ENCODE measurements at regions of chr16 and their contacts with region 1.

Region 1: DNA sequence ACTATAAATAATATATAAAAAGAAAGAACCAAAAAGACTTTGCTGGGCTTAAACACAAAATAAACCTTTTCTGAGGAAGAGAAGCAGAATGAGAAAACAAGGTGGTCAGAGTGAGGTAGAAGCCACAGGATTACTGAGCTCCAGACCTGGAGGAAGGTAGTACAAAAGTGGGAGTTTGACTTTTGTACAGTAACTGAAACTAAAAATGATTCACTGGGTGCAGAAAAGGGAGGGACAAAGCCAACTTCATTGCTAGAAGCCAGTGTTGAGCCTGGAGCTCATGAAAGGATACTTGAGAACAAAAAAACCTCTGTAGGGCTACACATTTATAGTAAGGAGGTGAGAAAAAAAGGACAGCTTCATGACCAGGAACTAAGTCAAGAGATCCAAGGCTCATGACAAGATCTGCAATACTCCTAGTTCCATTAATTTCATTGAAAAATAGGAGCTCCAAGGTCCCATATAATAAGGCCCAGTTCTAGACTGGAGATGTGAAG is 45.5 kb downstream of the PKD1L3 start:
- DNase-seq: peak; percentile 8
- H3K4me3 ChIP-seq: no peak overlapping the region
- H3K27ac ChIP-seq: no peak overlapping the region
- H3K4me1 ChIP-seq: no peaks in the 10 kb centered on the region
- H3K27me3 ChIP-seq: no peaks in the 10 kb centered on the region
- CTCF ChIP-seq: no peak

Region 2: GRCh38 chr16:71830359-71830758 is 124.4 kb before region 1 on chr16:
- CTCF ChIA-PET with region 1: no interaction called
- dilution Hi-C with region 1: no loop called
- in situ Hi-C with region 1: no loop called
- intact Hi-C with region 1: no loop called
- DNase-seq: no peak
- H3K4me3 ChIP-seq: no peak overlapping the region
- H3K27ac ChIP-seq: no peak overlapping the region
- H3K4me1 ChIP-seq: no peaks in the 10 kb centered on the region
- H3K27me3 ChIP-seq: no peaks in the 10 kb centered on the region
- CTCF ChIP-seq: no peak

Region 3: GRCh38 chr16:71903608-71904007 is 51.1 kb before region 1 on chr16:
- CTCF ChIA-PET with region 1: no interaction called
- dilution Hi-C with region 1: loop called (anchors 5 kb)
- in situ Hi-C with region 1: no loop called
- intact Hi-C with region 1: no loop called
- DNase-seq: no peak
- H3K4me3 ChIP-seq: no peak overlapping the region
- H3K27ac ChIP-seq: no peak overlapping the region
- H3K4me1 ChIP-seq: no peaks in the 10 kb centered on the region
- H3K27me3 ChIP-seq: no peaks in the 10 kb centered on the region
- CTCF ChIP-seq: no peak

Region 4: GRCh38 chr16:71933913-71934695 is 20.6 kb before region 1 on chr16:
- CTCF ChIA-PET with region 1: no interaction called
- dilution Hi-C with region 1: no loop called
- in situ Hi-C with region 1: no loop called
- intact Hi-C with region 1: no loop called
- DNase-seq: peak; percentile 25
- H3K4me3 ChIP-seq: no peak overlapping the region
- H3K27ac ChIP-seq: no peak overlapping the region
- H3K4me1 ChIP-seq: peaks cover 1% of the 10 kb centered on the region
- H3K27me3 ChIP-seq: no peaks in the 10 kb centered on the region
- CTCF ChIP-seq: no peak

Region 5: DNA sequence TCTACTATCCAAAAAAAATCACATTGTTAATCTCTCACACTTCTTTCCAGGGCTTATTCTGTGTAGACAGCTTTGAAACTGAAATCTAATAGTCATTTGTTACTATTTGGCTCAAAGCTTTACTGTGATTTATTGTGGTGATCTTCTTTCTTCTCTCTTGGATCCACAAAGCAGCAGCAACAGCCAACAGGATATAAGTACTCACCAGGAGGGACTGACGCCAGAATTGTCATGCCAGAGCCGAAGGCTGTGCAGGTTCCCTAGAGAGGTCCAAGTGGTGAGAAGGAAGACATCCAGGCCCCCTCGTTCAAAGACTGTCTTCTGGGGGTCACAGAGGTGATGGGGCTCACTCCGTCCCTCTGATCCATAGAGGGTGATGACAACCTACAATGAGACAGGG is 12.2 kb after region 1 on chr16:
- CTCF ChIA-PET with region 1: no interaction called
- dilution Hi-C with region 1: no loop called
- in situ Hi-C with region 1: no loop called
- intact Hi-C with region 1: no loop called
- DNase-seq: no peak
- H3K4me3 ChIP-seq: no peak overlapping the region
- H3K27ac ChIP-seq: no peak overlapping the region
- H3K4me1 ChIP-seq: no peaks in the 10 kb centered on the region
- H3K27me3 ChIP-seq: no peaks in the 10 kb centered on the region
- CTCF ChIP-seq: no peak

Region 6: DNA sequence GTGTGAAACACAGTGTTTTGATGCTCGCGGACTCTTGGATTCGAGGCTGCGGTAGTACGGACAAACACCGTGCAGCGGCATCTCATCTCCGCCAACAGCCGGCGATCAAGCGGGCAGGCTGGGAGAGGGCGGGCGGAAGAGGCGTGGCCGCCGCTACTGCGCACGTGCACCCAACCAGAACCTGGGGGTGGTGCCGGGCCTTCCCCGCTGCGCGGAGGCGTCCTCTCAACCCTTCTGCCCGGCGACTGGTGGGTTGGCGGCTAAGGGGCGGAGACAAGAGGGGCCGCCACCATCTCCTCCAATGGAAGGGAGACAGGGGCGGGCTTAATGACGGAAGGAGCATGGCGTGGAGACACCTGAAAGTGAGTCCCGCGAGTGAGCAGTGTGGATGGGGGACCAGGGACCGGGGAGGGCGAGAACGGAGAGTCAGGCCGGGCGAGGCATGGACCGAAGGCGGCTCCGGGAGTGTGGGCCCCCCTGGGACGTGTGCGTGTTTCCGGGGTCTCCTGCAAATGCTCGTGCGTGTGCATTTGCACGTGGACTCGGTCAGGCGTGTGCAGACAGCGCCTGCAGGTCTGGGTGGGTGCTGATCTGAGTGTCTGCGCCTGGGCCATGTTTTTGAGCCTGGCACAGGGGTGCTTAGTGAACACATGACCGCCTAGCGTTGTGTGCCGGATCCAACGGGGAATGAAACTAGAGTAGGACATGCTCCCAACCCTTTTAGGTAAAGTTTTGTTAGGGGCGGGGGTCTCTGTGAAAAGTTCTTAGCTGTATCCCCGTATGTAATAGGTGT is 53.9 kb after region 1 on chr16 and contains the start of gene DHODH:
- CTCF ChIA-PET with region 1: no interaction called
- dilution Hi-C with region 1: loop called (anchors 5 kb)
- in situ Hi-C with region 1: no loop called
- intact Hi-C with region 1: no loop called
- DNase-seq: peak; percentile 97
- H3K4me3 ChIP-seq: peak within 1 kb of the TSS; percentile 82 to 100 (median 99)
- H3K27ac ChIP-seq: peak within 1 kb of the TSS; percentile 32
- H3K4me1 ChIP-seq: peaks cover 12% of the 10 kb centered on the region
- H3K27me3 ChIP-seq: no peaks in the 10 kb centered on the region
- CTCF ChIP-seq: peak in 1 of 2 donors; percentile 4
- total RNA-seq, gene DHODH: 2.0 to 5.9 TPM

Region 7: DNA sequence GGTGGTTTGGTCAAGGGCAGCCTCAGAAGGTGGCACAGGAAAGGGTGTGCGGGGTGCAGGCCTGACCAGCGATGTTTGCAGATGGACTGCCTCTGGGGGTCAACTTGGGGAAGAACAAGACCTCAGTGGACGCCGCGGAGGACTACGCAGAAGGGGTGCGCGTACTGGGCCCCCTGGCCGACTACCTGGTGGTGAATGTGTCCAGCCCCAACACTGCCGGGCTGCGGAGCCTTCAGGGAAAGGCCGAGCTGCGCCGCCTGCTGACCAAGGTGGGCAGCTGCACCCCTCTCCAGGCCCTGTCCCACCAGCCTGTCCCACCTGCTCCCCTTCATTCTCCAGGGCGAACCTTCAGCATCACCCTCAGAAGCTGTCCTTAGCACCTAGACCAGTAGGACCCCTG is 66.3 kb after region 1 on chr16:
- CTCF ChIA-PET with region 1: no interaction called
- dilution Hi-C with region 1: no loop called
- in situ Hi-C with region 1: no loop called
- intact Hi-C with region 1: no loop called
- DNase-seq: no peak
- H3K4me3 ChIP-seq: no peak overlapping the region
- H3K27ac ChIP-seq: no peak overlapping the region
- H3K4me1 ChIP-seq: no peaks in the 10 kb centered on the region
- H3K27me3 ChIP-seq: no peaks in the 10 kb centered on the region
- CTCF ChIP-seq: no peak